ENCODE measurements at regions of chr14 and their contacts with region 1.

Region 1: GRCh38 chr14:54329082-54329695 is 67.6 kb upstream of the CDKN3 start:
- DNase-seq: peak; percentile 60
- ATAC-seq: peak; percentile 99
- H3K4me3 Mint-ChIP-seq: no peak overlapping the region
- H3K27ac Mint-ChIP-seq: no peak overlapping the region
- H3K4me1 Mint-ChIP-seq: peaks cover 3% of the 10 kb centered on the region
- H3K27me3 Mint-ChIP-seq: no peaks in the 10 kb centered on the region
- CTCF ChIP-seq: peak; percentile 68

Region 2: GRCh38 chr14:53663709-53664108 is 665.5 kb before region 1 on chr14:
- CTCF ChIA-PET with region 1: interaction called, 13 read pairs
- POLR2A ChIA-PET with region 1: no interaction called
- DNase-seq: peak; percentile 46
- ATAC-seq: peak; percentile 98
- H3K4me3 Mint-ChIP-seq: no peak overlapping the region
- H3K27ac Mint-ChIP-seq: no peak overlapping the region
- H3K4me1 Mint-ChIP-seq: peaks cover 14% of the 10 kb centered on the region
- H3K27me3 Mint-ChIP-seq: no peaks in the 10 kb centered on the region
- CTCF ChIP-seq: no peak

Region 3: DNA sequence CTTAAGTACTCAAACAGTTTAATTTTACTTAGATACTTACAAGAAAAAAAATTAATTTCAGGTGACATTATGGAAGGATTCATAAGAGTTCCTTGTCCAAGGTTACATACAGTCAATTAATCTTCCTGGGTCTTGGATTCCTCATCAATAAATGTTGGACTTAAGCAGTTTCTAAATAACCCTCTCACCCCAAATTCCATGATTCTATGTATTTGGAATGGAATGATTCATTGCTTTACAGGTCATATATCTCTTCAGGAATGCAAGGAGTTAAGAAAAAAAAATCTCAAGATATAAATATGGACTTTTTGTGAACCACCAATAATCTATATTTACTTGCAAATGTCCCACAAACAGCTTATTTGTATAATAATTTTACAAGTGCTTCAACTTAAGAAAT is 288.3 kb before region 1 on chr14:
- CTCF ChIA-PET with region 1: no interaction called
- POLR2A ChIA-PET with region 1: no interaction called
- DNase-seq: no peak
- ATAC-seq: no peak
- H3K4me3 Mint-ChIP-seq: no peak overlapping the region
- H3K27ac Mint-ChIP-seq: no peak overlapping the region
- H3K4me1 Mint-ChIP-seq: peaks cover 8% of the 10 kb centered on the region
- H3K27me3 Mint-ChIP-seq: no peaks in the 10 kb centered on the region
- CTCF ChIP-seq: no peak

Region 4: GRCh38 chr14:54175298-54175942 is 153.8 kb before region 1 on chr14:
- CTCF ChIA-PET with region 1: interaction called, 54 read pairs
- POLR2A ChIA-PET with region 1: no interaction called
- DNase-seq: peak; percentile 74
- ATAC-seq: peak; percentile 59
- H3K4me3 Mint-ChIP-seq: no peak overlapping the region
- H3K27ac Mint-ChIP-seq: no peak overlapping the region
- H3K4me1 Mint-ChIP-seq: no peaks in the 10 kb centered on the region
- H3K27me3 Mint-ChIP-seq: no peaks in the 10 kb centered on the region
- CTCF ChIP-seq: peak; percentile 76

Region 5: DNA sequence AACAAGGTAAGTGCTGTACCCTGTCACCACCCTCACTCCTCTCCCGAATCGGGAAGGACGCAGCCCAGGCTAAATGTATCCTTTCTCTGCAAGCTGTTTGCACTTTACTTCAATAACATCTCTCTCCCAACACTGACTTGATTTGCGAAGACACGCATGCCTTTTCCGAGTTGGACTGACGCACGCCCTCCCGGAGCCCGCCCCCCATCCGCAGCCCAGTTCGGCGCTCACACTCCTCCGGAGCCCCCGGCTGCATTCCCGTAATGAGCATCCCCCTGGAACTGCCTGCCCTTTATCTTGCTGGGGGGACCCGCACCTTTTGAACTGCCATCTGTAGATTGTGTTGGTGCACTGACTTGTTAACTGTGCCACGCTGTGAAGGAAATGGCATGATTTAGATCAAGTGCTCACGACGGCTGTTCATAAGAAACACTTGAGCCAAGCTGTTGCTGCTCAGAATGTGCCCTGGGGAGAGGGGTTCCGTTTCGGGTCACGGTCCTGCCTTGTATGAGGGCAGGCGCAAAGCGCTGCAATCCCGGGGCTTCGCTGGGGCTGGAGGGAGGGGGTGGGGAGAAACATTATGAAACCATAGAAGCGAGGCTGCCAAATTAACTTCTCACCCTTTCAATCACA is 109.0 kb before region 1 on chr14:
- CTCF ChIA-PET with region 1: interaction called, 31 read pairs
- POLR2A ChIA-PET with region 1: no interaction called
- DNase-seq: peak; percentile 42
- ATAC-seq: peak; percentile 62
- H3K4me3 Mint-ChIP-seq: peak overlapping the region; percentile 84
- H3K27ac Mint-ChIP-seq: no peak overlapping the region
- H3K4me1 Mint-ChIP-seq: peaks cover 34% of the 10 kb centered on the region
- H3K27me3 Mint-ChIP-seq: peaks cover 64% of the 10 kb centered on the region
- CTCF ChIP-seq: no peak

Region 6: DNA sequence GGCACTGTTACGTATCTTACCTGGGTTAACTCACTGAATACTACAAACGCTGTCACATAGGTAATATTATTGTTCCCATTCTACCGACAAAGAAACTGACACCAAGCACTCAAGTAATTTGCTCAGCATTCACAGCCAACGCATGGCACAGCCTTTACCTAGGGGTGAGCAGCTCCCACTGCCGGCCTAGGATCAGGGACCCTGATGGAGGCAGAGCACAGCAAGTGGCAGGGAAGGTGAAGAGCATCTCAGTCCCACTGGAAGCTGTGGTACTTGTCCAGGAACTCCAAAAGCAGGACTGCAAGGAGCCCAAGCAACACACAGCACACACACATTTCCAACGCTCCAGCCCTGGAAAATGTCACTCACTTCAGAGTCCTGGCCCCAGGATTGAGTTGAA is 44.2 kb before region 1 on chr14:
- CTCF ChIA-PET with region 1: no interaction called
- POLR2A ChIA-PET with region 1: no interaction called
- DNase-seq: no peak
- ATAC-seq: peak; percentile 60; the same call in 1 of the 2 replicates
- H3K4me3 Mint-ChIP-seq: no peak overlapping the region
- H3K27ac Mint-ChIP-seq: no peak overlapping the region
- H3K4me1 Mint-ChIP-seq: no peaks in the 10 kb centered on the region
- H3K27me3 Mint-ChIP-seq: no peaks in the 10 kb centered on the region; the same call in 1 of the 2 replicates
- CTCF ChIP-seq: no peak

Region 7: DNA sequence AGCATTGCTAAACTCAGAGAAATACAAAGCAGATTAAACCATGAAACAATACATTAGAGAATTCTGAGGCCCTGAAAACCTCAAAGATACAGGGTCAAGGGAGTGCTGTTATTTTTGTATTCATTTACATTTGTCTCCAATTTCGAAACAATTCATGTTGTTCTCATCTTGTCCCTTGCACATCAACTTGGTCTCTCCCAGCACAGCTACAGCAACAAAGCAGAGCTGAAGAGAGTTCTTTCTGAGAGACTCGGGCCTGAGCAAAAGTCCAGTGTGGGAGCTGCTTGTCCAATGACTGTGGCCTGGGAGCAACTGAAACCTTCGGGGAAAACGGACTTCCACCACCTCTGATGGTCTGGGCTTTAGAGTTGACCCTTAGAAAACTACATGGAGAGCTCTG is 11.8 kb before region 1 on chr14:
- CTCF ChIA-PET with region 1: interaction called, 27 read pairs
- POLR2A ChIA-PET with region 1: no interaction called
- DNase-seq: no peak
- ATAC-seq: no peak
- H3K4me3 Mint-ChIP-seq: no peak overlapping the region
- H3K27ac Mint-ChIP-seq: no peak overlapping the region
- H3K4me1 Mint-ChIP-seq: no peaks in the 10 kb centered on the region
- H3K27me3 Mint-ChIP-seq: no peaks in the 10 kb centered on the region; the same call in 1 of the 2 replicates
- CTCF ChIP-seq: no peak